ENCODE measurements at regions of chr14 and their contacts with region 1.

Region 1: DNA sequence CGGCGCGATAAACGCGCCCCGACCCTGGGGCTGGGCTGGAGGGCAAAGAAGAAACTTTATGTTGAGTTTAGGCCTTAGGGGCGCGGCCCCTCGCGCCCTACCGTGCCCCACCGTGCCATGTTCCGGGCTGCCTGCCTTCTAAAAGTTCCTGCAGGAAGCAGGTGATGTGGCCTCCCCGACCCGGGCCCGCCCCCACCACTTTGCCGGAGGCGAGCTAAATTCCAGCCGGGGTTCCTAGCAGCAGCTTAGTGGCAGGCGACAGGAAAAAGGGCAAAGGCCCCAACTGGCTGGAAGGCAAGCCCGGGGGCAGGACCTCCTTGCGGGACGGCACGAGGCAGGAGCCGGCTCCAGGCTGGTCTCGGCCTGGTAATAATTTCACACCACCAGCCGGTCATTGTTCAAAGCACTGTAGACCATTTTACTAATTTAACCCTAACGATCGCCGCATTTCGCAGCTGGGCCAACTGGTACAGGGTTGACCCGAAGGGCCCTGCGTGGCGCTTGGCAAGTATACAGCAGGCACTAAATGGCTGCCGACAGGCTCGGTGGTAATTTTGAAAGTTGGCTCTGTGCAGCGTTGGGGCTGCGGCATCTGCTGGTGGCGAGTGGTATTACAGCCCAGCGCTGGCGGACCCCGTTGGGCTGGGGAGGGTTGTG is 895 bp upstream of the CCDC88C start:
- DNase-seq: peak; percentile 55 to 79 (median 73)
- H3K4me3 ChIP-seq: peak overlapping the region in 6 of 7 experiments; percentile 74 to 91 (median 79)
- H3K27ac ChIP-seq: no peak overlapping the region
- H3K4me1 ChIP-seq: peaks cover 10 to 44% (median 41%) of the 10 kb centered on the region in 4 experiments
- H3K27me3 ChIP-seq: no peaks in the 10 kb centered on the region

Region 2: GRCh38 chr14:91177073-91178034 is 241.2 kb before region 1 on chr14:
- CTCF ChIA-PET with region 1: no interaction called
- POLR2A ChIA-PET with region 1: no interaction called
- DNase-seq: peak; percentile 70 to 83 (median 78)
- H3K4me3 ChIP-seq: no peak overlapping the region
- H3K27ac ChIP-seq: peak overlapping the region in 1 of 2 experiments; percentile 47
- H3K4me1 ChIP-seq: peaks cover 0 to 4% (median 0%) of the 10 kb centered on the region in 4 experiments
- H3K27me3 ChIP-seq: no peaks in the 10 kb centered on the region

Region 3: DNA sequence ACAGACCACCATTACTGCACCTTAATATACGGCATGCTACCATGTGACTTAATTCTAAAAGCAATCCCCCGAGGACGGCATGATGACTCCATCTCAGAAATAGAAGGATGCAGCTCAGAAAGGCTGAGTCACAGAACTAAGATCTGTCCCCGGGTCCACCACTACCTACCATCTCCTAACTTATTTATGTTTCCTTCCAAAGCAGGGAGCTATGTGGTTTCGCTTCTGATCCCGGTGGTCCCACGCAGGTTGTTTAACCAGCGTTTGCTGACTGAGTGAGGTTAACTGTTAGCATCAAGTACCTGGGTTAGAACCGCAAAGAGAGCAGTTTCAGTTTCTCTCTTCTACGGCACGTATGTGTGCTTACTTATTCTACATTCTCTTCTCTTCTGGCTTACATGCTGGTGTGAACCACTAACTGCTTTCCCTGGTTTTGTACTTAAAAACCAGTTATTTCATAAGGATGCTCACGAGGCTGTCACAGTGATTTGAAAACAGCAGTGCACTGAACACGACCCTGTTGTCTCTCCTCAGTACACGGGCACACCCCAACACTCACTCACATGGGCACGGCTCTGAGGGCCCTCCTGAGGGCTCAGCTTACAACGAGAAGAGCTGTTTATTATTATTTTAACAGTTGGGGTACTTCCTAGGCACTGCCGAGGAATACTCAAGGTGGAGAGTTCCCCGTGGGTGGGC is 67.6 kb before region 1 on chr14:
- CTCF ChIA-PET with region 1: interaction called, 13 read pairs
- POLR2A ChIA-PET with region 1: no interaction called
- DNase-seq: peak; percentile 56 to 87 (median 84)
- H3K4me3 ChIP-seq: peak overlapping the region in 6 of 7 experiments; percentile 2 to 78 (median 38)
- H3K27ac ChIP-seq: no peak overlapping the region
- H3K4me1 ChIP-seq: peaks cover 4 to 48% (median 34%) of the 10 kb centered on the region in 4 experiments
- H3K27me3 ChIP-seq: no peaks in the 10 kb centered on the region

Region 4: GRCh38 chr14:91396959-91397815 is 21.3 kb before region 1 on chr14:
- CTCF ChIA-PET with region 1: interaction called, 14 read pairs
- POLR2A ChIA-PET with region 1: interaction called, 3 read pairs
- DNase-seq: peak in 2 of 3 donors; percentile 40 to 66
- H3K4me3 ChIP-seq: peak overlapping the region in 5 of 7 experiments; percentile 0 to 49 (median 20)
- H3K27ac ChIP-seq: peak overlapping the region in 1 of 2 experiments; percentile 32
- H3K4me1 ChIP-seq: peaks cover 10 to 87% (median 80%) of the 10 kb centered on the region in 4 experiments
- H3K27me3 ChIP-seq: no peaks in the 10 kb centered on the region

Measured in common myeloid progenitor, CD34-positive (primary cell).